Activated naive CD4-positive, alpha-beta T cell treated with anti-CD3 and anti-CD28 coated beads for 36 hours (primary cell): ENCODE measurements at regions of chr2 and their contacts with region 1.

Region 1: DNA sequence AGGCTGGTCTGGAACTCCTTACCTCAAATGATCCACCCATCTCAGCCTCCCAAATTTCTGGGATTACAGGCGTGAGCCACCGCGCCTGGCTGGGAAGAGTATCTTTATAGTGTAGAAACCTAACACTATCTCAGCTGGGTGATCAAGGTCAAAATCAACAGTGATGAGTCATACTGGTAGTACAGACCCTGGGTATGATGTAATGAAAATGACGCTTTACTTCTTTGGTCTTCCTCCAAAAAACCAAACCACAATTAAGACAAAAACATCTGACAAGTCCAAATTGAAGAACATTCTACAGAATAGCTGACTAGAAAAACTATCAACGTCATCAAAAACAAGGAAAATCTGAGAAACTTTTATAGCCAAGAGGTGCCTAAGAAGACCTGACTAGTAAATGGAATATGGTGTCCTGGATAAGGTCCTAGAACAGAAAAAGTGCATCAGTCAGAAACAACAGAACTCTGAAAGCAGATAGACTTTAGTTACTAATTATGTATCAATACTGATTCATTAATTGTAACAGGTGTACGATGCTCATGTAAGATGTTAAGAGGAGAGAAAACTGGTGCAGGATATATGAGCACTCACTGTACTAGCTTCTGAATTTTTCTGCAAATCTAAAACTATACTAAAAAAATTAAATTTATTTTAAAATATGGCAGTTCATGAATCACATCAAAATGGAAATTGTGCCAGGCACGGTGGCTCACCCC is 25.4 kb downstream of the PDCL3 start:
- DNase-seq: peak; percentile 34
- H3K4me3 Mint-ChIP-seq: peak overlapping the region; percentile 17
- H3K27ac Mint-ChIP-seq: peak overlapping the region; percentile 54
- H3K4me1 Mint-ChIP-seq: peaks cover 31% of the 10 kb centered on the region
- H3K27me3 Mint-ChIP-seq: no peaks in the 10 kb centered on the region

Region 2: DNA sequence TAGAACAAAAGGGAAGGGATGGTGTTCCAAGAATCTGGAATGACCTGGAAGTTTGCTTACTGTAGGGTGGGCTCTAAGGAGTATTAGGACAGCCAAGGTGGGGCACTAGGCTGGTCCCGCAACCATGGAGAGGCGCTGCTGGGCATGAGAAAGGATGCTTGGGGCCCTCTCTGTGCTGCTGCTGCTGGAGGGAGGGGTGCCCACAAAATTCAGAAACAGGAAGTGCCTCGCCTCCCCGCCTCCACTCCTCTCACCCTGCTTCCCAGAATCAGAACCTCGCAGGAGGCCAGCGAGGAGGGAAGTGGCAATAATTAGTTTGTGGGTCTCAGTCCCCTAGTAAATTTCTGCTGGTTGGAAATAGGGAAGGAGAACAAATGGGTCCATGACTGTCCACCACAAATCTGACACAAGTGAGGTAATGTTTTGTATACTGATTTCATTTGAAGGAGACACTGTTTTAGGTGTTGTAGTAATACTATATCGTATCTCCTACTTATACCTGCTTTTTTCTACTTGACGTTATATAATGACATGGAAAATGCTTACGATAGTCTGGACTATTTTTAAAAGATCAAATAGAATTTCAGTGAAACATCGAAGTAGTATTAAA is 33.3 kb before region 1 on chr2:
- CTCF ChIA-PET with region 1: no interaction called
- intact Hi-C with region 1: loop called (anchors 2 kb)
- DNase-seq: peak; percentile 81
- H3K4me3 Mint-ChIP-seq: peak overlapping the region; percentile 67
- H3K27ac Mint-ChIP-seq: peak overlapping the region; percentile 88
- H3K4me1 Mint-ChIP-seq: peaks cover 15% of the 10 kb centered on the region
- H3K27me3 Mint-ChIP-seq: no peaks in the 10 kb centered on the region